Heart right ventricle (tissue), 16 donors: ENCODE measurements at regions of chr14 and their contacts with region 1.

Region 1: DNA sequence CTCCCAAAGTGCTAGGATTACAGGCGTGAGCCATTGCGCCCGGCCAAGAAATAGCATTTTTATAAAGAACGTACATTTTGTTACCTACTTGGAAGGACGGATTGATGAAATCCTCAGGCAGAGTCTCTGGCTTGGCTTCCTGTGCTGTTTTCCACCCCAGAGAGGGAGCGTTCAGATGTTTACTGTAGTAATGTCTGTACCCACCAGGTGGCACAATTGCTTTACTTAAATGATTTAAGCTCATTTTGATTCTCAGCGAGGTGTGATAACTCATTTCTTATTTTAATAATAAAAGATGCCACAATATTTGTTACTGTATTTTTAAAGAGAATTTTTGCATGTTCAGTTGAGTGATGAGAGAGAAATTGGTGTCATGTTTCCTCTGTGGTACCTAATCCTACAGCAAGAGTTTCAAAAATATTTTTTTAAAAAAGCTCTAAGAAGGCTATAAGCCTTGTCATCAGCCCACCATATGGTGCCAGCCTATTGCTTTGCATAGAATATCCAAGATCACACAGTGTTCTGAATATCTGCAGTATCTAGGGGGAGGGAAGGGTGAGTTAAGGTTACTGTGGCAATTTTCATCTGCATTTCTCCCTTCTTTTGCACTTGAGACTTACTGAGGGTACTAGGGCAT is 82.6 kb upstream of the TRAF3 start:
- DNase-seq: peak in 1 of 2 donors; percentile 82
- ATAC-seq: peak; percentile 55 to 83 (median 78)
- H3K4me3 ChIP-seq: no peak overlapping the region
- H3K27ac ChIP-seq: no peak overlapping the region
- H3K4me1 ChIP-seq: peaks cover 0 to 43% (median 36%) of the 10 kb centered on the region in 9 donors
- H3K27me3 ChIP-seq: no peaks in the 10 kb centered on the region
- CTCF ChIP-seq: peak; percentile 60 to 85 (median 78)

Region 2: GRCh38 chr14:102524466-102525218 is 170.0 kb before region 1 on chr14:
- intact Hi-C with region 1: loop called in 2 of 10 experiments (anchors 10 kb)
- DNase-seq: peak; percentile 99 to 100
- ATAC-seq: peak; percentile 98 to 100 (median 99)
- H3K4me3 ChIP-seq: peak overlapping the region; percentile 29 to 81 (median 64)
- H3K27ac ChIP-seq: peak overlapping the region; percentile 42 to 93 (median 86)
- H3K4me1 ChIP-seq: peaks cover 0 to 28% (median 10%) of the 10 kb centered on the region in 9 donors
- H3K27me3 ChIP-seq: no peaks in the 10 kb centered on the region
- CTCF ChIP-seq: peak; percentile 93 to 100 (median 99)

Region 3: DNA sequence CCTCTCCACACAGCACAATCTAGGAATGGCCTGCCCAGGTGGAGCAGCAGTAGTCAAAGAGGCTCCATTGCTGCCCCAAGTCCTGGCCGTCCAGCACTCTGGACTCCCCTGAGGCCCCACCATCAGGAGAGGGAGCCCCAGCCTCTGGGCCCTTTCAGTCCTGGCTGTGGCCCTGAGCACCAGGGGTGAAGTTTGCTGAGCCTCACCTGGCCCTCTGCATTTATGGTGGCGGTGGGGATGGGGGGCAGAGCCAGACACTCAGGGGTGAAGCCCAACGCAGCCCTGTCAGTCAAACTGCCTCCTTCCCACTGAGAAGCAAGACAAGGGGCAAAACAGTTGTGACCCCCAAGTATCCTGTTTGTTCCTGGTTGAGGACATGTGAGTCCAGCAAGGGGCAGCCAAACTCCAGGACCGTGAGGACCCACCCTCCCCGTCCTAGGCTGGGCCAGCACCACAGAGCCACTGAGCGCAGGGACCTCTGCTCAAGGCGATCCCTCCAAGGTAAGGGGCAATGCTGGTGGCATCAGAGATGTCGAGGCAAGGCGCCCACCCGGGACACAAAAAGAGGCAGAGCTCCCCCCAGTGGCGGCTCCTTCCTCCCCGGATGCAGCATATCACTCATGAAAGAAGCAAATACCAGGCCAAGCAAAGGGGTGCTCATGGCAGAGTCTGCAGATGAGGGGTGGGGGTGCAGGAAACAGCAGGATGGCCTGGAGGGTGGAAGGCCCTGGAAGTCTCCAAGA is 223.0 kb after region 1 on chr14:
- intact Hi-C with region 1: loop called in 9 of 10 experiments (anchors 5 to 10 kb)
- DNase-seq: peak; percentile 49 to 63
- ATAC-seq: peak in 5 of 8 donors; percentile 35 to 63 (median 46)
- H3K4me3 ChIP-seq: no peak overlapping the region
- H3K27ac ChIP-seq: no peak overlapping the region
- H3K4me1 ChIP-seq: peaks cover 0 to 3% (median under 1%) of the 10 kb centered on the region in 9 donors
- H3K27me3 ChIP-seq: peaks cover 0 to 17% (median 9%) of the 10 kb centered on the region in 7 donors
- CTCF ChIP-seq: peak; percentile 24 to 74 (median 67)

Region 4: DNA sequence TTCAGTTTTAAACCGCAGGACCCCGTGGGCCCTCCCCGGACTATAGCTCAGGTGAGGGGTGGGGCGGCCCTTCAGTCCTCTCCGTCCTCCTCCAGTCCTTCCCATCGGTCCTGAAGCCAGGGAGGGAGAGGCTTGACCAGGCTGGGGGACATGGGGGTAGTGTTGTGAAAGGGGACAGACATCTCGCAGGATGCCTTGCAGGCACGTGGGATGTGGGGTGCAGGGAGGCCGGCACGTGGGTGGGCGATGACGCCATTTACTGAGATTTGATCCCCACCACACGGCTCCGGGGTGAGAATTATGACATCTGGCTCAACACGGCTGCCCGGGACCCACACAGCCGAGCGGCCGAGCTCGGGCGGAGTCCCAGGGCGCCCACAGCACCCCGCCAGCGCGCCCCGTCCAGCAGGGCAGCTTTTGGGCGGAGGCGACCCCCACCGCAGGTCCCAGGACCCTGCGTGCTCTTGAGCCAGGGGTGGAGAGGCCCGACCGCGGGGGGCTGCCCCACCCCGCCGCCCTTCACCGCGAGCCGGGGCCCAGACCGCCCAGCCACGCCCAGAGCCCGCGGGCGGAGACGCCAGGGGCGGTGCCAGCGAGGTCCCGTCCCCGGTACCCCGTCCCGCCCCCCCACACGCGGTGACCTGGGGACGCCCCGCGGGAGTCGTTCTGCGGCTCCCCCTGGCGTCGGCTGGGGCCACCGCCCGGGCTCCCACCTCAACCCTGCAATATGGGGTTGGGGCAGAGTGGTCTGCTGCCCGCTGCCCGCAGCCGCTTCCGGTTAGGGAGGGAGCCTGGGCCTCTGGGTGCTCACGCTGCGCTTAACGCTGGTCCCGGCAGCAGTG is 396.6 kb after region 1 on chr14:
- intact Hi-C with region 1: loop called in 1 of 10 experiments (anchors 10 kb)
- DNase-seq: peak in 1 of 2 donors; percentile 71
- ATAC-seq: peak; percentile 53 to 73 (median 62)
- H3K4me3 ChIP-seq: peak overlapping the region; percentile 21 to 60 (median 54)
- H3K27ac ChIP-seq: peak overlapping the region in 6 of 10 donors; percentile 9 to 47 (median 31)
- H3K4me1 ChIP-seq: peaks cover 0 to 27% (median 12%) of the 10 kb centered on the region in 9 donors
- H3K27me3 ChIP-seq: peaks cover 0 to 25% (median 11%) of the 10 kb centered on the region in 7 donors
- CTCF ChIP-seq: peak; percentile 25 to 71 (median 59)

Region 5: GRCh38 chr14:103292426-103293374 is 598.1 kb after region 1 on chr14:
- intact Hi-C with region 1: loop called in 3 of 10 experiments (anchors 10 kb)
- DNase-seq: peak; percentile 77 to 80
- ATAC-seq: peak; percentile 87 to 97 (median 92)
- H3K4me3 ChIP-seq: no peak overlapping the region
- H3K27ac ChIP-seq: no peak overlapping the region
- H3K4me1 ChIP-seq: no peaks in the 10 kb centered on the region
- H3K27me3 ChIP-seq: peaks cover 0 to 29% (median 4%) of the 10 kb centered on the region in 7 donors
- CTCF ChIP-seq: peak; percentile 86 to 96 (median 93)